ENCODE measurements at regions of chr7 and their contacts with region 1.

Region 1: DNA sequence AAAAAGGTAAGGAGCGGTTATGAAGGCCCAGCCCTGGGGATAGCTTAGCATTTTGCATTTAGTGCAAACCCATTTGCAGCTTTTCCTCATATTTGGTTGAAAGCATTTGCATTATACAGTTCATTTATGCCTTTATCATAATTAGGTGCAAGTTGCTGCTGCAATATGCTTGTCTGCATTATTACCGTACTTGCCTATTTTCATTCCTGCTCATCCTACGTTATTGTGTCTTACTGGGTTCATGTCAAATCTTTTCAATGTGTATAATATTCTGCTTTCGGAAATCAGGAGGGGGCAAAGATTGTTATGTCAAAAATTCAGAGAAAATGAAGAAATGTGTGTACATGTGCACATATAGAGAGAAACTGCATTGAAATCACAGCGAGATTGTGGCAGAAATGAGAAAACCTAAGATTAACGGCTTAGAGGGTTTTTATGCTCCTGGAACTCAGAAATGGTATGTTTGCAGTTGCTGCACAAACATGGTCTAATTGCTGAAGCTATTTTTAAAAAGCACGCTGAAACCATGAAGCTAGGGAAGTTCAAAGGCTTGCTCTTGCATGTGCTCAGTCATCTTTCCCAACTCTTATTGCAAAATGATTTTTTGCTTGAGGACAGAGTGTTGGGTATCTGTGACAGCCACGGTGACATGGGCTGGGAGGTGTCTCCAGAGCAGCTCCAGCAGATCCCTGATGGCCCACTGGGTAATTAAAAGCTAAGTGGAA is 613.2 kb downstream of the SDK1 start:
- DNase-seq: no peak
- ATAC-seq: no peak
- H3K4me3 ChIP-seq: no peak overlapping the region
- H3K27ac ChIP-seq: no peak overlapping the region
- H3K4me1 ChIP-seq: no peaks in the 10 kb centered on the region
- H3K27me3 ChIP-seq: no peaks in the 10 kb centered on the region
- CTCF ChIP-seq: no peak

Region 2: GRCh38 chr7:3897438-3898385 is 16.5 kb before region 1 on chr7:
- CTCF ChIA-PET with region 1: no interaction called
- POLR2A ChIA-PET with region 1: interaction called, 10 read pairs
- in situ Hi-C with region 1: no loop called
- intact Hi-C with region 1: no loop called
- DNase-seq: peak; percentile 35
- ATAC-seq: 0 out of 2 replicates have a peak, but pooled peaks have one; percentile 69
- H3K4me3 ChIP-seq: no peak overlapping the region
- H3K27ac ChIP-seq: peak overlapping the region; percentile 58
- H3K4me1 ChIP-seq: peaks cover 3% of the 10 kb centered on the region; the same call in 1 of the 2 replicates
- H3K27me3 ChIP-seq: no peaks in the 10 kb centered on the region
- CTCF ChIP-seq: peak; percentile 89